PC-3 (cell line): ENCODE measurements at regions of chr16 and their contacts with region 1.

Region 1: GRCh38 chr16:15874745-15875314 is 13.6 kb downstream of the CEP20 start:
- DNase-seq: peak; percentile 62
- ATAC-seq: peak; percentile 58
- H3K4me3 ChIP-seq: no peak overlapping the region
- H3K27ac ChIP-seq: no peak overlapping the region
- H3K4me1 ChIP-seq: peaks cover 15% of the 10 kb centered on the region
- H3K27me3 ChIP-seq: no peaks in the 10 kb centered on the region
- CTCF ChIP-seq: peak; percentile 80

Region 2: DNA sequence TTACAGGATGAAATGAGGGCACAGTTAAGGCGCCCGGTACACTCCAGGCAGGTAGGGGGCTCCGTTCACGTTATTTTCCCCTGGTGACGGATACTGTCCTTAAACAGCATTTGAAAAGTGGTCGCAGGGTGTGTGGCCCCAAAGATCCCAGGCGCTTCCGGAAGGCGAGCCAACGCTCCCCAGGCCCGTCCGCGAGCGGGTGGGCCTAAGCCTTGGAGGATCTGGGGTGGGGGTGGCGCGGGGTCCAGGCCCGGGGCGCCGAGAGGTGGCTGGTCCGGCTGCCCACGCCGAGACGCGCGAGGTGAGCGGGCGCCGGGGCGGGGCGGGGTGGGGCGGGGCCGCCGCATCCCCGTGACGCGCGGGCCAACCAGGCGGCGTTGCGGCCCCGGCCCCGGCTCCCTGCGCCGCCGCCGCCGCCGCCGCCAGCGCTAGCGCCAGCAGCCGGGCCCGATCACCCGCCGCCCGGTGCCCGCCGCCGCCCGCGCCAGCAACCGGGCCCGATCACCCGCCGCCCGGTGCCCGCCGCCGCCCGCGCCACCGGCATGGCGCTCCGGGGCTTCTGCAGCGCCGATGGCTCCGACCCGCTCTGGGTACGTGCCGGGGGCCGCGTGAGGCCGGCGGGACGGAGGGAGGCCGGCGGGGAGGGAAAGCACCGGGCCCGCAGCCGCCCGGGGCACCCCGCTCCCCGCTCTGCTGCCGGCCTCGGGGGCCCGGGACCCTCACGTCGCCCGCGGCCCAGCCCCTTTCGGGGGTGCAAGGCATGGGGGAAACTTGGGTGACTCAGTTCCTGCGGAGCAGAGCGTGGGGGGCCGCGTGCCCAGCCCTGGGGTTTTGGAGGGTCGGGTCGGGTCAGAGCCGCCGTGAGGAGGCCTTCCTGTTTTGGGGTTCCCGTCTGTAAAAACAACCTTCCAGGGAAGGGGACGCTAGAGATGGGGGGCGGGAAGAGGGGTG is 74.7 kb after region 1 on chr16 and contains the start of gene ABCC1:
- CTCF ChIA-PET with region 1: no interaction called
- POLR2A ChIA-PET with region 1: no interaction called
- intact Hi-C with region 1: loop called (anchors 1 kb)
- DNase-seq: peak; percentile 49
- ATAC-seq: peak; percentile 57
- H3K4me3 ChIP-seq: peak within 1 kb of the TSS; percentile 88
- H3K27ac ChIP-seq: peak within 1 kb of the TSS; percentile 40
- H3K4me1 ChIP-seq: peaks cover 22% of the 10 kb centered on the region
- H3K27me3 ChIP-seq: no peaks in the 10 kb centered on the region
- CTCF ChIP-seq: 0 out of 2 replicates have a peak, but pooled peaks have one; percentile 21
- total RNA-seq, gene ABCC1: 16.1 and 29.0 TPM in 2 replicates

Region 3: GRCh38 chr16:15970202-15970601 is 95.4 kb after region 1 on chr16:
- CTCF ChIA-PET with region 1: no interaction called
- POLR2A ChIA-PET with region 1: no interaction called
- intact Hi-C with region 1: no loop called
- DNase-seq: peak; percentile 16
- ATAC-seq: no peak
- H3K4me3 ChIP-seq: no peak overlapping the region
- H3K27ac ChIP-seq: no peak overlapping the region
- H3K4me1 ChIP-seq: peaks cover 19% of the 10 kb centered on the region
- H3K27me3 ChIP-seq: no peaks in the 10 kb centered on the region
- CTCF ChIP-seq: no peak

Region 4: DNA sequence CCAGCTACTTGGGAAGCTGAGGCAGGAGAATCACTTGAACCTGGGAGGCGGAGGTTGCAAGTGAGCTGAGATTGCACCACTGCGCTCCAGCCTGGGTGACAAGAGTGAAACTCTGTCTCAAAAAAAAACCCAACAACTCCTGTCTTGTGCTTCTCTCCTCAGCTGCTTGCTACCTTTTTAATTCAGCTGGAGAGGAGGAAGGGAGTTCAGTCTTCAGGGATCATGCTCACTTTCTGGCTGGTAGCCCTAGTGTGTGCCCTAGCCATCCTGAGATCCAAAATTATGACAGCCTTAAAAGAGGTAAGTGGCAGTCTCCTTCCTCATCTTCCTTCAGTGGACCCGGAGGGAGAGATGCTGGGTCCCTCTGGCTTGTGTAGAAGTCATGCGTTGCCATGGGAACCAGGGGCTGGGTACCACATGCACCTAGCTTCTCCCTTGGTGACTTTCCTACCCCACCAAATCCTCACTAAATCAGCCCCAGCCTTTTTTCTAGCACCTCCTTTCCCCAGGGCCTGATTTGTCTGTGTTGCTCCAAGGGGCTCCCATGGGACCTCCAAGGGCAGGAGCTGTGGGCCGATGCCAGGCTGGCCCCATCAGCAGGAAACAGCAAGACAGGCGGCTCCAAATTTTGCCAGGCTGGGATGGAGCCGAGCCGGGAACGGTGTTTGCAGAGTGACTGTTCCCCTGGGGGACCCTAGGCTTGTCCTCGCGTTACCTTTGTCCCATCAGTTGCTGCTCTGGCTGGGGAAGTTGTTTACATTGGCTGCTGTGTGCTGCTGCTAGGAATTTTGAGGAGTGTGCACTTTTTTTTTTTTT is 139.7 kb after region 1 on chr16:
- CTCF ChIA-PET with region 1: no interaction called
- POLR2A ChIA-PET with region 1: no interaction called
- intact Hi-C with region 1: loop called (anchors 10 kb)
- DNase-seq: peak; percentile 88
- ATAC-seq: peak; percentile 87
- H3K4me3 ChIP-seq: no peak overlapping the region
- H3K27ac ChIP-seq: peak overlapping the region; percentile 7; the same call in 1 of the 2 replicates
- H3K4me1 ChIP-seq: peaks cover 38% of the 10 kb centered on the region
- H3K27me3 ChIP-seq: no peaks in the 10 kb centered on the region
- CTCF ChIP-seq: no peak

Region 5: GRCh38 chr16:16033208-16033717 is 158.4 kb after region 1 on chr16:
- CTCF ChIA-PET with region 1: no interaction called
- POLR2A ChIA-PET with region 1: no interaction called
- intact Hi-C with region 1: no loop called
- DNase-seq: no peak
- ATAC-seq: no peak
- H3K4me3 ChIP-seq: no peak overlapping the region
- H3K27ac ChIP-seq: no peak overlapping the region
- H3K4me1 ChIP-seq: peaks cover 14% of the 10 kb centered on the region
- H3K27me3 ChIP-seq: no peaks in the 10 kb centered on the region
- CTCF ChIP-seq: no peak

Region 6: GRCh38 chr16:16045879-16046278 is 171.0 kb after region 1 on chr16:
- CTCF ChIA-PET with region 1: no interaction called
- POLR2A ChIA-PET with region 1: no interaction called
- intact Hi-C with region 1: loop called (anchors 5 kb)
- DNase-seq: no peak
- ATAC-seq: no peak
- H3K4me3 ChIP-seq: peak overlapping the region; percentile 46; the same call in 1 of the 2 replicates
- H3K27ac ChIP-seq: peak overlapping the region; percentile 92
- H3K4me1 ChIP-seq: peaks cover 23% of the 10 kb centered on the region
- H3K27me3 ChIP-seq: no peaks in the 10 kb centered on the region
- CTCF ChIP-seq: no peak

Region 7: DNA sequence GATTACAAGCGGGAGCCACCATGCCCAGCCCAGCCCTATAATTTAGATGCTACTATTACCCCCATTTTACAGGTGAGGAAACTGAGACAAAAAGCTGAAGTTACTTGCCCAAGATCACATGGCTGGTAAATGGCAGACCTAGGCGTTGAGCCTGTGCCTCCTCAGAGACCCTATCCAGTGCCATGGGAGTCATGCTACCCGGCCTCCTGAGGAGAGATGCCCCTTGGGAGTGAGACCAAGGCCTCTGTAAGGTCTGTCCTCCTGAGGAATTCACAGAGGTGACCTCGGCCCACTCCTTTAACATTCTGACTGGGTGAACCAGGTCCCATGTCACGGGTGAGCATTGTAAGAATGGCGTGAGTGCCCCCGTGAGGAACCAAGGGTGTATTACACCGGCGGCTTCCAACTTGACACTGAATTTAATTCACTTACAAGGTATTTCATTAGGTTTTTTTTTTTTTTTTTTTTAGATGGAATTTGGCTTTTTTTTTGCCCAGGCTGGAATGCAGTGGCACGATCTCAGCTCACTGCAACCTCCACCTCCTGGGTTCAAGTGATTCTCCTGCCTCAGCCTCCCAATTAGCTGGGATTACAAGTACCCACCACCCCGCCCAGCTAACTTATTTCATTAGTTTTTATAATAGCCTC is 252.8 kb after region 1 on chr16:
- CTCF ChIA-PET with region 1: no interaction called
- POLR2A ChIA-PET with region 1: no interaction called
- intact Hi-C with region 1: loop called (anchors 1 kb)
- DNase-seq: peak; percentile 74
- ATAC-seq: peak; percentile 76
- H3K4me3 ChIP-seq: no peak overlapping the region
- H3K27ac ChIP-seq: no peak overlapping the region
- H3K4me1 ChIP-seq: no peaks in the 10 kb centered on the region
- H3K27me3 ChIP-seq: no peaks in the 10 kb centered on the region
- CTCF ChIP-seq: peak; percentile 73